A549 (cell line): ENCODE measurements at regions of chr6 and their contacts with region 1.

Region 1: GRCh38 chr6:40845553-40845952 is 193.5 kb downstream of the UNC5CL start:
- DNase-seq: peak; percentile 15 to 52
- ATAC-seq: peak; percentile 81 to 86; a peak in 5 of 6 replicates
- H3K4me3 ChIP-seq: no peak overlapping the region
- H3K27ac ChIP-seq: no peak overlapping the region
- H3K4me1 ChIP-seq: no peaks in the 10 kb centered on the region
- CTCF ChIP-seq: peak; percentile 44
- EP300 ChIP-seq: no peak
- POLR2A ChIP-seq: no peak
- RAD21 ChIP-seq: peak; percentile 54 to 59; a peak in 4 of 5 replicates

Region 2: DNA sequence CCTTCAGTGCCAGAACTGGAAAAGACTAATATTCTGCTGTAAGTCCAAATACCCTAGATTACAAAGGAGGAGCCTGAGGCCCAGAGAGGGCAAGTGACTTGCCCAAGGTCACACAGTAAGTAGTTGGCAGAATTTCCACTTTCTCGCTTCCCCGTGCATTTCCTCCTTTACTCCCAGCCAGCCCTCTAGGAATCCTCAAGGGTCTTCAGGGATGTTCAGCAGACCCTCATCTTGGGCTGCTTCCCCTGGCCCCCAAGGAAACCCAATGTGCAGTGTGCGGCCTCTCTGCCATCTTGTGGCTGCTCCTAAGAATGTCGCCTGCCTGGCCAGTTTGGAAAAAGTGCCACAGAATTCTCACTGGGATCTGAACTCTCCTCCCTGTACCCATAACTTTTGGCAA is 40.6 kb before region 1 on chr6:
- CTCF ChIA-PET with region 1: no interaction called
- POLR2A ChIA-PET with region 1: no interaction called
- DNase-seq: no peak
- ATAC-seq: no peak
- H3K4me3 ChIP-seq: no peak overlapping the region
- H3K27ac ChIP-seq: no peak overlapping the region
- H3K4me1 ChIP-seq: peaks cover 13% of the 10 kb centered on the region
- CTCF ChIP-seq: no peak
- EP300 ChIP-seq: no peak
- POLR2A ChIP-seq: no peak
- RAD21 ChIP-seq: 0 out of 5 replicates have a peak, but pooled peaks of 1 of the 2 experiments have one; percentile 18

Region 3: GRCh38 chr6:40856271-40856670 is 10.7 kb after region 1 on chr6:
- CTCF ChIA-PET with region 1: interaction called, 11 read pairs
- POLR2A ChIA-PET with region 1: no interaction called
- DNase-seq: no peak
- ATAC-seq: no peak
- H3K4me3 ChIP-seq: no peak overlapping the region
- H3K27ac ChIP-seq: no peak overlapping the region
- H3K4me1 ChIP-seq: no peaks in the 10 kb centered on the region
- CTCF ChIP-seq: no peak
- EP300 ChIP-seq: no peak
- POLR2A ChIP-seq: no peak
- RAD21 ChIP-seq: no peak

Region 4: GRCh38 chr6:40930555-40930954 is 85.0 kb after region 1 on chr6:
- CTCF ChIA-PET with region 1: no interaction called
- POLR2A ChIA-PET with region 1: no interaction called
- DNase-seq: peak in 1 of 2 experiments; percentile 24
- ATAC-seq: no peak; a peak in 2 of 6 replicates
- H3K4me3 ChIP-seq: no peak overlapping the region
- H3K27ac ChIP-seq: peak overlapping the region in 1 of 2 experiments; percentile 28; a peak in 1 of 6 replicates
- H3K4me1 ChIP-seq: peaks cover 25% of the 10 kb centered on the region; the same call in 2 of the 3 replicates
- CTCF ChIP-seq: no peak
- EP300 ChIP-seq: no peak
- POLR2A ChIP-seq: no peak
- RAD21 ChIP-seq: no peak

Region 5: DNA sequence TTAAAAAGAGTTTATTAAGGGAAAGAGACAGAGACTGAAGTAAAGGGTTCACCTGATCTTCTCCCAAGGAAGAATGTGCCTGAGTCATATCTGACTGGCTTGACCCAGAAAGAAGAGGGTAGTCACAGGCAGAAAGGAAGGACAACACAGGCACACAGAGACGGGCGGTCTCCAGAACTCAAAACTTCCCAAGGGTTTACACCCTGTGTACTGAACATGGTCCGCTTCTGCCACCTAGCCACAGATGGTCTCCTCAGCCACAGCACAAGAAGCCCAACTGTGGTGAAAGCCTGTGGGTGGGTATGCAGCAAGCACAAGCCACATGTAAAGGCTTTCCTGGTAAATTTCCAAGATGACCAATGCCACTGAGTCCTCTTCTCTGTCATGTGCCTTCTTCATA is 176.3 kb after region 1 on chr6:
- CTCF ChIA-PET with region 1: interaction called, 10 read pairs
- POLR2A ChIA-PET with region 1: no interaction called
- DNase-seq: peak; percentile 45 to 83
- ATAC-seq: peak; percentile 98
- H3K4me3 ChIP-seq: no peak overlapping the region
- H3K27ac ChIP-seq: peak overlapping the region; percentile 74 to 80
- H3K4me1 ChIP-seq: peaks cover 30% of the 10 kb centered on the region
- CTCF ChIP-seq: peak; percentile 65
- EP300 ChIP-seq: no peak
- POLR2A ChIP-seq: no peak
- RAD21 ChIP-seq: peak; percentile 87 to 88